Endothelial cell of umbilical vein (primary cell): ENCODE measurements at regions of chr13 and their contacts with region 1.

Region 1: DNA sequence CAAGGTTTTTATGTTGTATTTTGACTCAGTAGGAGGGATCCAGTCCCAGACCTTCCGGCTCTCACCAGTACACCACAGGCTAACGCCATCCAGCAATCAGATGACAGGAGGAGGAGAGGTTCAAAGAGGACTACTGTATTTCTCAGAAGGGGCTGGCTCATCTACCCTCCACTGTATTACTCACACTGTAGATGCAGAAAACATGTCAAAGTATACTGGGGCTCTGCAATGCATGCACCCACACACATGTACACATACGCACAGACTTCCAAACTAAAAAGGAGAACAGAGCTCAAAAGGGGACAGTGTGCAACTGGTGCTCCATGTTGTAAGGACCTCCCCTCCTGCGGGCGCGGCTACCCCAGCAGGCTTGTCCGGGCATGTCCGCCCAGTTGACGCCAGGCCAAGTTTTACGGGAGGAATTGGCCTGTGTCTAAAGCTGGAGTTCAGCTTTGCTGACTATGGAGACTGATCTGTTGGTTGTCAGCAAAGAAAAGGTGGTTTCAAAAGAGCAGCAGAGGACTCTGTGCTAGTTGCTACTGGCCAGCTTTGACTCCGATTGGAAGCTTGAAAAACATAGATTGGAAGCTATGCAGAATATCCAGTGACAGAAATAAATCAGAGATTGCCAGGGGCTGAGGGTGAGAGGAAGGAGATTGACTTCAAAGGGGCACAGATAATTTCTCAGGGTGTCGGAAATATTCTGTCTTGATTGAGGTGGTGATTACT is 314.2 kb downstream of the DLEU7 start:
- DNase-seq: peak; percentile 81
- H3K4me3 ChIP-seq: no peak overlapping the region
- H3K27ac ChIP-seq: peak overlapping the region; percentile 39
- H3K4me1 ChIP-seq: peaks cover 8% of the 10 kb centered on the region
- H3K27me3 ChIP-seq: no peaks in the 10 kb centered on the region
- CTCF ChIP-seq: no peak
- POLR2A ChIP-seq: no peak

Region 2: DNA sequence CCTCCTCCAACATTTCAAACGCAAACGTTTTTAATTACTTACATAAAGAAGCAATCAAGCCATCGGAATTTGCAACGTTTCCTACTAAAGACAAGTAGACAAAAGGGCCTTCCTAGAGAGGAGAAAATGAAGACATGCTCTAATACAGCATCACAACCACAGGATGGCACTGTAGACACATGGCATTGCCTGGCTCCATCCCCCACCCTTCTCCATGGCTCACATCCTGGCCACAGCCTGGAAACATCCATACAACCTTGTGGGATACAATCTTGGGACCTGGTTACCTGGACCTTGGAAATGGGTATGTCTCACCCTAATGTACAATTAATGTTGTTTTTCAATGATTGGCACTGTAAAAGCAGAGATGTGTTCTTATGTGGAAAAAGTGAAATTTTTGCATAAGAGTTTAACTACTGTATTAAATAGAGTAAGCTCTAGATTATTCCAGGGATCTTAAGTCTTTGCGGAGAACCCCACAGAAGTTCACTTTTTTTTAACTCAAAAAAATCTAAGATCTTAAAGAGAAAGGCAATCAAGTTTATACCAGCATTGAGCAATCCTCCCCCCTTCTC is 859.5 kb before region 1 on chr13:
- CTCF ChIA-PET with region 1: no interaction called
- POLR2A ChIA-PET with region 1: no interaction called
- dilution Hi-C with region 1: no loop called
- intact Hi-C with region 1: loop called (anchors 10 kb)
- DNase-seq: peak; percentile 86
- H3K4me3 ChIP-seq: no peak overlapping the region
- H3K27ac ChIP-seq: no peak overlapping the region
- H3K4me1 ChIP-seq: peaks cover 11% of the 10 kb centered on the region
- H3K27me3 ChIP-seq: no peaks in the 10 kb centered on the region
- CTCF ChIP-seq: peak; percentile 60 to 75
- POLR2A ChIP-seq: no peak

Region 3: DNA sequence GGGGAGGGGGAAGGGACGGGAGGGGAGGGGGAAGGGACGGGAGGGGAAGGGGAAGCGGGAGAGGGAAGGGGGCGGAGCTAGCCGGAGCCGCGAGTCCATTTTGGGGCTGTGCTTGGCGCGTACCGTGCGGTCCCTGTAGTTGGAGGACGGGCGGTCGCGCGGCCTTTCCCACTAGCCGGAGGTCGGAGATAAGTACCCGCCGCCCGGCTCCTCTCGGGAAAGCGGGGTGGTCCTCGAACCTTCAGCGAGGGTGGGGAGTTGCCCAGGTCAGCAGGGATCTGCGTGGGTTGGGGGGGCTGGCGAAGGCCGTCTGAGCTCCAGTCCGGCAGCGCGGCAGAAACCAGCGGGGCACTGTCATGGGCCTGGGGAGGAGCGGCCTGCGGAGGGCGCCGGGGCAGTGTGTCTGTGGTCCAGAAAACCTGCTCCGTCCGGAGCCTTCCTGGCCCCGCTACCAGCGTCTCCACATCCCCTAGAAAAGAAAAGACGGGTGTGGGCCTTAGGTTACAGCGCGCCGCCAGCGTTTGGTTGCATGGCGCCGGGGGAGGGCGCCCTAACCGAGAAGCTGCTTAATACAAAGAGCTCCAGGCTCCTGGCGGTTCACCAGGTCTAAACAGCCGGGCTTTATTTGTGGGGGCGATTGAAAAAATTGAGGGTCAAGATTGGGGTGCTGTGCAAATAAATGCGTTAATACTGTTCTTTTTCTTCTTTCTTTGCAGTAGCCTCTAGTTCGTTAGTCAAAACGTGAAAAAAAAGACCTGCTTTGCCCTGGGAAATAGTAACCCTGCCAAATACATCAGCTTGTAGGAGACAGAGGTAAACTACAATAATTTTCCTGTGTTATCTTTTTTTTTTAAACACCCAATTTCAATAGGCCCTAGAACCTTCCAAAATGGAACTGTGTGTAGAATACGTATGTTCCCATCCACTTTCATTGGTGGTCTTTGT is 532.1 kb before region 1 on chr13 and contains the start of gene TRIM13:
- CTCF ChIA-PET with region 1: interaction called, 4 read pairs
- POLR2A ChIA-PET with region 1: no interaction called
- dilution Hi-C with region 1: no loop called
- intact Hi-C with region 1: loop called (anchors 5 kb)
- DNase-seq: peak; percentile 93
- H3K4me3 ChIP-seq: peak within 1 kb of the TSS; percentile 84 to 98 (median 95)
- H3K27ac ChIP-seq: peak within 1 kb of the TSS; percentile 93
- H3K4me1 ChIP-seq: peaks cover 35% of the 10 kb centered on the region
- H3K27me3 ChIP-seq: no peaks in the 10 kb centered on the region
- CTCF ChIP-seq: peak; percentile 80 to 81
- POLR2A ChIP-seq: peak; percentile 84
- total RNA-seq, gene TRIM13: 25.9 and 28.2 TPM in 2 replicates

Region 4: GRCh38 chr13:50376895-50377575 is 152.3 kb before region 1 on chr13:
- CTCF ChIA-PET with region 1: no interaction called
- POLR2A ChIA-PET with region 1: no interaction called
- dilution Hi-C with region 1: no loop called
- intact Hi-C with region 1: loop called (anchors 1 kb)
- DNase-seq: no peak
- H3K4me3 ChIP-seq: no peak overlapping the region
- H3K27ac ChIP-seq: no peak overlapping the region
- H3K4me1 ChIP-seq: peaks cover 5% of the 10 kb centered on the region
- H3K27me3 ChIP-seq: no peaks in the 10 kb centered on the region
- CTCF ChIP-seq: no peak
- POLR2A ChIP-seq: no peak

Region 5: GRCh38 chr13:50801087-50801931 is 272.0 kb after region 1 on chr13:
- CTCF ChIA-PET with region 1: interaction called, 5 read pairs
- POLR2A ChIA-PET with region 1: no interaction called
- dilution Hi-C with region 1: no loop called
- intact Hi-C with region 1: loop called (anchors 2 kb)
- DNase-seq: peak; percentile 75
- H3K4me3 ChIP-seq: no peak overlapping the region
- H3K27ac ChIP-seq: no peak overlapping the region
- H3K4me1 ChIP-seq: peaks cover 4% of the 10 kb centered on the region
- H3K27me3 ChIP-seq: no peaks in the 10 kb centered on the region
- CTCF ChIP-seq: peak; percentile 71 to 72
- POLR2A ChIP-seq: no peak